ENCODE measurements at regions of chr4 and their contacts with region 1.

Region 1: DNA sequence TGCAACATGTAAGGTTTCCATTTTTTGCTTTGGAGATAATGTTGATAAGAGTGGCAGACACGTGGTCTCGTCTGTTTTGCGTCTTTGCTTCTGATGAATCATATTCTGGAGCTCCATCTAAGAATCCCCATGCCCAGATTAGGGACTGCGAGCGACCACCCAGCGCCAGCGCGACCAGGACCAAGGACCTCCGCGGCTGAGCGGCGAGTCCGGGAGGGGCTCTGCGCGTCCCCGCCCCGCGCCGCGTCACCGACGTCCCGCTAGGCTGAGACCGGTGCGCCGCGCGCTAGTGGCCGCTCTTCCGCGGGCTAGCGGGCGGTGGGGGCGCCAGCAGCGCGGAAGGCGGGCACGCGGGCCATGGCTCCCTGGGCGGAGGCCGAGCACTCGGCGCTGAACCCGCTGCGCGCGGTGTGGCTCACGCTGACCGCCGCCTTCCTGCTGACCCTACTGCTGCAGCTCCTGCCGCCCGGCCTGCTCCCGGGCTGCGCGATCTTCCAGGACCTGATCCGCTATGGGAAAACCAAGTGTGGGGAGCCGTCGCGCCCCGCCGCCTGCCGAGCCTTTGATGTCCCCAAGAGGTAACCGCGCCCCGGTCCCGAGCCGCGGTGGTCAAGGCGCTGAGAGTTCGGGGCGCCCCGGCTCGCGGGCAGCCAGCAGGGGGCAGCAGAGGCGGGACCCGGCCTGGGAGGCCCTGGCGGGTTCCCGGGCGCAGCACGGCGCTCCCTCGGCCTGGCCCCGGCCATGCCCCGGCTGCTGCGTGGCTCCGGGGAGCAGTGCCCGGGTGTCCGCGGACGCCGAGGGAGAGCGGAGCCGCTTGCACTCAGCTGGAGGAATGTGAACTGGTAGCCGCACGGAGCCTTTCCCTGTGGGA is at the start of gene SRD5A3:
- DNase-seq: peak; percentile 83
- H3K4me3 Mint-ChIP-seq: peak within 1 kb of the TSS; percentile 77
- H3K27ac Mint-ChIP-seq: peak within 1 kb of the TSS; percentile 71
- H3K4me1 Mint-ChIP-seq: peaks cover 23% of the 10 kb centered on the region
- H3K27me3 Mint-ChIP-seq: no peaks in the 10 kb centered on the region
- CTCF ChIP-seq: peak; percentile 92
- total RNA-seq, gene SRD5A3: 18.9 and 26.1 TPM in 2 replicates

Region 2: DNA sequence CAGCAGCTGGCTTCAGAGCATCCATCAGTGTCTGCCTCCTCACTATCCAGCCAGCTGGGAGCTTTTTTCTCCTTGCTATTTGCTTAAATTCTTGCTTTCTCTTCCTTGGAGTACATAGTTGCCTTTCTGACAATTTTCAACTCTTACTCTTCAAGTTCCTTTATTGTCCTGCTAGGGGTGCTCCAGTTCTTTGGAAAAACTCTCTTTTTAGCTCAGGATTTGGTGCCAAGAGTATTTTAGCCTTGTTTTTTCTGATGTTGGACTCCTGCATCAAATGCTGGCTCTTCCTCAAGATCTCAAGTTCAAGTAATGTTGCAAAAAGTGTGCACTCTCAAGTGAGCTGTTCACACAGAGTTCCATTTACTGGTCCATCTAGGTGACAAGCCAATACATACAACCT is 347.2 kb before region 1 on chr4:
- CTCF ChIA-PET with region 1: interaction called, 11 read pairs
- POLR2A ChIA-PET with region 1: no interaction called
- intact Hi-C with region 1: no loop called
- DNase-seq: peak; percentile 47
- H3K4me3 Mint-ChIP-seq: no peak overlapping the region
- H3K27ac Mint-ChIP-seq: no peak overlapping the region
- H3K4me1 Mint-ChIP-seq: peaks cover 26% of the 10 kb centered on the region
- H3K27me3 Mint-ChIP-seq: no peaks in the 10 kb centered on the region
- CTCF ChIP-seq: peak; percentile 47

Region 3: DNA sequence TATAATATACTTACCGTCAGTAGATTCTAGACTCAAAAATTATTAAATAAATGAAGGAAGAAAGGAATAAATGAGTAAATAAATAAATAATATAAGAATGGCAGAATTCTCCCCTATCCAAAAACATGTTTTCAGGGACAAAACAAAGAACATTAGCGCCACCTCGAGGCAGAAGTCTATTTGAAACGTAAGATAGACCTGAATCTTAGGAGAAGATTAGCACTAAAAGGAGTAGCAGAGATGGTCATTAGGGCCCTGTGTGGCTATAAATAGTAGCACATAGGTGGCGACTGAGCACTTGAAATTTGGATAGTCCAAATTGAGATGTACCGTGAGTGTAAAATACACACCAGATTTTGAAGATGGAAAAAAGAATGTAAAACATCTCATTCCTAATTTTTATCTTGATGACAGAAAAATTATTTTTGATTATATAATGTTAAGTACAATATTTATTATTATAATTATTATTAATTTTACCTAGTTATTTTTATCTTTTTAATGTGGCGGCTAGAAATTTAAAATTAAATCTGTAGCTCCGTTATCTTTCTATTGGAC is 24.4 kb before region 1 on chr4:
- CTCF ChIA-PET with region 1: interaction called, 20 read pairs
- POLR2A ChIA-PET with region 1: interaction called, 4 read pairs
- intact Hi-C with region 1: no loop called
- DNase-seq: peak; percentile 91
- H3K4me3 Mint-ChIP-seq: no peak overlapping the region
- H3K27ac Mint-ChIP-seq: no peak overlapping the region
- H3K4me1 Mint-ChIP-seq: peaks cover 14% of the 10 kb centered on the region
- H3K27me3 Mint-ChIP-seq: no peaks in the 10 kb centered on the region
- CTCF ChIP-seq: peak; percentile 63

Region 4: DNA sequence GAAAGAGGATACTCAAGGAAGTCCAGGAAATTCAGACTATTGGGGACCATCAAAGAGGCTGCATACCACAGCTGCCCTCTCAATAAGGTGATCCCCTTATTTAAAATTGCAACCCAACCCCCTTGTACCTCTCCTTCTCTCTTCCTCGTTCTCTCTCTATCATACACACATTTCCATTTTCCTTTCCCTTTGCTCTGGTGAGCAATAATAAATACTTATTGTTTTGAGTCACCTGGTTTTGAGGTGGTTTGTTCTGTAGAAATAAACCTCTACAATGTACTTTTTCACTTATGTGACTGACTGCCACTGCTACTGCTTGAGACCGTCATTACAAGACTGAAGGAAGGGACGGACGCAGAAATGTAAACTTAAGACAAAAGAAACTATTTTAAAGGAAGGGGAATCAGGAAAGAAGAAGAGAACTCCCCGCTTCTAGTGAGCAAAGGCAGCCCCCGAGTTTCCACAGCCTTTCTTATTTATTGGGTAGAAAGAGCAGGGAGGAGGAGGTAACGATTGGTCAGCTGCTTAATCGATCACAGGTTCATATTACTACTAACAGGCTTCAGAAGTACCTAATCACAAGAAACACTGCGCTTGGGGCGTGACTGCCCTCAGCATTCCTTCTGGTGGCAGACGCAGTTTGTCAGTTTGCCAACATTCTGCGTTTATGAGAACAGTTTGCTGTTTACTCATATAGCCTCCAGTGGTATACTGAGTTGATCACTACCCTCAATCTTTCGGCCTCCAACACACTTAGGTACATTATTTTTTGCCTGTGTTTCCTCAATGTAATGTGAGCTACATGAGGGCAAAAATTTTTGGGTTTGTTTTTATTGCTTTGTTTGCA is 32.6 kb after region 1 on chr4:
- CTCF ChIA-PET with region 1: interaction called, 18 read pairs
- POLR2A ChIA-PET with region 1: interaction called, 5 read pairs
- intact Hi-C with region 1: no loop called
- DNase-seq: peak; percentile 85
- H3K4me3 Mint-ChIP-seq: peak overlapping the region; percentile 56
- H3K27ac Mint-ChIP-seq: peak overlapping the region; percentile 81
- H3K4me1 Mint-ChIP-seq: peaks cover 8% of the 10 kb centered on the region
- H3K27me3 Mint-ChIP-seq: no peaks in the 10 kb centered on the region
- CTCF ChIP-seq: no peak

Region 5: DNA sequence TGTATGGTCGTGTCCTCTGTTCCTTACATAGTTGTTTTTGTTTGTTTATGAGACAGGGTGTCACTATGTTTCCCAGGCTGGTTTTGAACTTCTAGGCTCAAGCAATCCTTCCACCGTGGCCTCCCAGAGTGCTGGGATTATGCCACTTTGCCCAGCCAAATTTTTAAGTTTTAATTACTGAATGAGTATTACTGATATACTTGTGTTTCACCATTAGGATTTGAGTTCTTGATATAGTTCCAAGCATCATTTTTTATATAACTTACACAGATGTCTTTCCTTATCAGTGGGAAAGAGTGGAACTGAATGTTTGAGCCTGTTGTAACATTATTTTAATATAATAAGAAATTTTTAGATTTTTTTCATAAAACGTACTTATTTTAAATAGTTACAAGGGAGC is 70.0 kb after region 1 on chr4:
- CTCF ChIA-PET with region 1: interaction called, 9 read pairs
- POLR2A ChIA-PET with region 1: interaction called, 11 read pairs
- intact Hi-C with region 1: loop called (anchors 5 kb)
- DNase-seq: no peak
- H3K4me3 Mint-ChIP-seq: no peak overlapping the region
- H3K27ac Mint-ChIP-seq: no peak overlapping the region
- H3K4me1 Mint-ChIP-seq: no peaks in the 10 kb centered on the region
- H3K27me3 Mint-ChIP-seq: no peaks in the 10 kb centered on the region
- CTCF ChIP-seq: no peak

Region 6: GRCh38 chr4:55435141-55435841 is 89.1 kb after region 1 on chr4:
- CTCF ChIA-PET with region 1: interaction called, 5 read pairs
- POLR2A ChIA-PET with region 1: interaction called, 4 read pairs
- intact Hi-C with region 1: loop called (anchors 5 kb)
- DNase-seq: peak; percentile 30
- H3K4me3 Mint-ChIP-seq: no peak overlapping the region
- H3K27ac Mint-ChIP-seq: no peak overlapping the region
- H3K4me1 Mint-ChIP-seq: no peaks in the 10 kb centered on the region
- H3K27me3 Mint-ChIP-seq: no peaks in the 10 kb centered on the region
- CTCF ChIP-seq: peak; percentile 33

Region 7: GRCh38 chr4:55736605-55737183 is 390.5 kb after region 1 on chr4:
- CTCF ChIA-PET with region 1: interaction called, 6 read pairs
- POLR2A ChIA-PET with region 1: interaction called, 4 read pairs
- intact Hi-C with region 1: loop called (anchors 2 kb)
- DNase-seq: peak; percentile 27
- H3K4me3 Mint-ChIP-seq: no peak overlapping the region
- H3K27ac Mint-ChIP-seq: no peak overlapping the region
- H3K4me1 Mint-ChIP-seq: peaks cover 11% of the 10 kb centered on the region
- H3K27me3 Mint-ChIP-seq: no peaks in the 10 kb centered on the region
- CTCF ChIP-seq: peak; percentile 47

Measured in MCF 10A (cell line).